ENCODE measurements at regions of chr19 and their contacts with region 1.

Region 1: DNA sequence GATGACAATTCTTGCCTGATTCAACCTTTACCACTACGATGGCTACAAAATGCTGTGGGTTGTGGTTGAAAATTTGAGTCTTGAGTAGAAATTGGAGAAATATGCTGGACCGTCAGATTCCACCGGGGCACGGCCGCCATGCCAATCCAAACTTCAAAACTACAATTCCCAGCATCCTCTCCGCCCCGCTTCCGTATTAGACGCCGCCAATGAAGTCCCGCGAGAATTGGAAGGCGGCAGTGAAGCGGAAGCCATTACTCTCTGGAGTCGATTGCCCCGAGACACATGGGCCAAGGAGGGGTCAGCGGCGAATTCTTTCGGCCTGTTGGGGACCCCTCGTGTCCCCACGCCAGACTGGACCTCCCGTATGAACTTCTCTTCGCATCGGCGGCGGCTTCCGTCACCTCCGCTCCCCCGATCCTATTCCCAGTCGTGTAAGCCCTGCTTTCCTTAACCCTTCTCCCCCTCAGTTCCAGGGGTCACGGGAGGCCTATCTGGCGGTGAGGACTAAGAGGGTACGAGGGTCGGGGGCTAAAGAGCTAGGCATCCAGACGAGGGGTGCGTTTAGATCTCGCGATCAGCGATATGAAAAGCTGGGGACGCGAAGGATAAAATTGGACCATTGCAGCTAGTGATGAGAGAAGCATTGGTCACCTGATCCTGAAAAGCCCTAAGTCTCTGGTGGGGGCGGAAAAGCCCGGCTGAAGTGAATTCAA is at the start of gene ZNF317:
- DNase-seq: peak; percentile 96
- H3K4me3 ChIP-seq: peak within 1 kb of the TSS; percentile 87
- H3K27ac ChIP-seq: peak within 1 kb of the TSS; percentile 37
- H3K4me1 ChIP-seq: peaks cover 11% of the 10 kb centered on the region
- CTCF ChIP-seq: no peak
- total RNA-seq, gene ZNF317: 19.9 and 26.5 TPM in 2 replicates

Region 2: GRCh38 chr19:9178901-9179300 is 38.6 kb after region 1 on chr19 and contains the start of gene OR7D2:
- CTCF ChIA-PET with region 1: no interaction called
- POLR2A ChIA-PET with region 1: no interaction called
- intact Hi-C with region 1: no loop called
- DNase-seq: no peak
- H3K4me3 ChIP-seq: no peak within 1 kb of the TSS
- H3K27ac ChIP-seq: no peak within 1 kb of the TSS
- H3K4me1 ChIP-seq: no peaks in the 10 kb centered on the region
- CTCF ChIP-seq: no peak
- total RNA-seq, gene OR7D2: not detected in 2 replicates

Region 3: DNA sequence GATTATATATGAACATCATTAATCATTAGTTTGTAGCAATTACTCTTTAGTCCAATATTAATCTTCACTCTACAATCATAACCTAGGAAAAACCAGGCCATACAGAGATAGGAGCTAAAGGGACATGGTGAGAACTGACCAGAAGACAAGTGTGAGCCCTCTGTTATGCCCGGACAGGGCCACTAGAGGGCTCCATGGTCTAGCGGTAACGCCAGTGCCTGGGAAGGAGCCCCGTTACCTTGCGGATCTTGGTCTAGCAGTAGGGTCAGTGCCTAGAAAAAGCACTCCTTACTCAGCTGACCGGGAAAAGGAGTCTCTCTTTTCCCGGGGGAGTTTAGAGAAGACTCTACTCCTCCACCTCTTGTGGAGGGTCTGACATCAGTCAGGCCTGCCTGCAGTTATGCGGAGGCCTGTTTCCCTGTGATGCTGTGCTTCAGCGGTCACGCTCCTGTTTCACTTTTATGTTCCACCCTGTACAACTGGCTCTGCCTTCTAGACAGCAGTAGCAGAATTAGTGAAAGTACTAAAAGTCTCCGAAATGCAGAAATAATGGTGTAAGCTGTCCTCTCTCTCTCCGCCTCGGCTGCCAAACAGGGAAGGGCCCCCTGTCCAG is 65.3 kb after region 1 on chr19:
- CTCF ChIA-PET with region 1: no interaction called
- POLR2A ChIA-PET with region 1: no interaction called
- intact Hi-C with region 1: loop called (anchors 2 kb)
- DNase-seq: peak; percentile 67
- H3K4me3 ChIP-seq: no peak overlapping the region
- H3K27ac ChIP-seq: no peak overlapping the region
- H3K4me1 ChIP-seq: no peaks in the 10 kb centered on the region
- CTCF ChIP-seq: peak; percentile 85

Region 4: DNA sequence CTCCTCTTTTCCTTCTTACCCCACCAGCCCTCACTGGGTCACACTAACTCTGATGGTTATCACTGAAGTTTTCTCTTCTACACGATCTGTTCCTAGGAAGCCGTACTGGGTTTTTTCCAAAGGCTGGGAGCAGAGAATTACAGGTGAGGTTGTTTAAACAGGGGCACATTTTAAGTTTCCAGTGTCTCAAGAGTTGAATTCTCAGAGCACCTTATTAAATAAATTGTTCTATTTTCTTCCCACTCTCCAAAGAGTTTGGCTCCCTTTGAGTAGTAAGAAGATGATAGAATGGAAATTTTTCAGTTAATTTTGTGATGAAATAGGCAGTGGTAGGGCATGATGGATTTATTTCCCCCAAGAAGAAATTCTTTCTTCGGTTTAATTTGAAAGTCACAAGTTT is 79.2 kb after region 1 on chr19 and contains the start of gene OR7D4:
- CTCF ChIA-PET with region 1: no interaction called
- POLR2A ChIA-PET with region 1: no interaction called
- intact Hi-C with region 1: no loop called
- DNase-seq: no peak
- H3K4me3 ChIP-seq: no peak within 1 kb of the TSS
- H3K27ac ChIP-seq: no peak within 1 kb of the TSS
- H3K4me1 ChIP-seq: no peaks in the 10 kb centered on the region
- CTCF ChIP-seq: no peak
- total RNA-seq, gene OR7D4: not detected in 2 replicates

Region 5: DNA sequence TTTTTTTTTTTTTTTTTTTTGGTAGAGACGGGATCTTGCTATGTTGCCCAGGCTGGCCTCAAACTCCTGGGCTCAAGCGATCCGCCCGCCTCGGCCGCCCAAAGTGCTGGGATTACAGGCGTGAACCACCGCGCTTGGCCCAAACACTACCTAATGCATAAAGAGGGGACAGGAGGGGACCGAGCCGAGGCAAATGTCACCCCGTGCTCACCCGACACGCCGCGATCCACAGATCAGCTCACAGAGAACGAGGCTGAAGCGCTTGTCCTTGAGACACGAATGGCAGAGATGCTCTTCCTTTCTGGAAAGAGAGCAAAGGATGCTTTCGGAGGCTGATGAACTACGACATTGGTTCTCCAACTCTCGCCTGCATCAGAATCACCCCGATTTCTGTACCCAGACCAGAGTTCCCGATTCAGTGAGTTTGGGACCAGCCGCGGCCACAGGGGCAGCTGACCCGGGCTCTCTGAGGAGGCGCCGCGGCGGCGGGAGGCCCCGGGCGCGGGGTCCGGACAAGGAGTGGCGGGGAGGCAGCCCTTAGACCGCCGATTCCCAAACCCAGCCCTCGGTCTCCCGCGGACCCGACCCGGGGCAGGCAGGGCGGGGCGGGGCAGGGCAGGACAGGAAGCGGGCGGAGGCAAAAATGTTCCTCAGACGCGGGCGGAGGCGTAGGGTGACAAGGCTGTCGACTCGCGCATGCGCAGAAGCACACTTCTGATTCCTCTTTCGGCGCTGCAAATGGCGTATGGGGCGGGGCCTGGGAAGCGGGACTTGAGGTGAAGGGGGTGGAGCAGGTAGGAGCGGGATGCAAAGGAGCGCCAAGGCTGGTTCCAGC is 169.0 kb after region 1 on chr19 and contains the start of gene ZNF699:
- CTCF ChIA-PET with region 1: no interaction called
- POLR2A ChIA-PET with region 1: no interaction called
- intact Hi-C with region 1: loop called (anchors 10 kb)
- DNase-seq: peak; percentile 99
- H3K4me3 ChIP-seq: peak within 1 kb of the TSS; percentile 80
- H3K27ac ChIP-seq: peak within 1 kb of the TSS; percentile 69
- H3K4me1 ChIP-seq: peaks cover 12% of the 10 kb centered on the region
- CTCF ChIP-seq: no peak
- total RNA-seq, gene ZNF699: 8.2 and 9.7 TPM in 2 replicates

Region 6: DNA sequence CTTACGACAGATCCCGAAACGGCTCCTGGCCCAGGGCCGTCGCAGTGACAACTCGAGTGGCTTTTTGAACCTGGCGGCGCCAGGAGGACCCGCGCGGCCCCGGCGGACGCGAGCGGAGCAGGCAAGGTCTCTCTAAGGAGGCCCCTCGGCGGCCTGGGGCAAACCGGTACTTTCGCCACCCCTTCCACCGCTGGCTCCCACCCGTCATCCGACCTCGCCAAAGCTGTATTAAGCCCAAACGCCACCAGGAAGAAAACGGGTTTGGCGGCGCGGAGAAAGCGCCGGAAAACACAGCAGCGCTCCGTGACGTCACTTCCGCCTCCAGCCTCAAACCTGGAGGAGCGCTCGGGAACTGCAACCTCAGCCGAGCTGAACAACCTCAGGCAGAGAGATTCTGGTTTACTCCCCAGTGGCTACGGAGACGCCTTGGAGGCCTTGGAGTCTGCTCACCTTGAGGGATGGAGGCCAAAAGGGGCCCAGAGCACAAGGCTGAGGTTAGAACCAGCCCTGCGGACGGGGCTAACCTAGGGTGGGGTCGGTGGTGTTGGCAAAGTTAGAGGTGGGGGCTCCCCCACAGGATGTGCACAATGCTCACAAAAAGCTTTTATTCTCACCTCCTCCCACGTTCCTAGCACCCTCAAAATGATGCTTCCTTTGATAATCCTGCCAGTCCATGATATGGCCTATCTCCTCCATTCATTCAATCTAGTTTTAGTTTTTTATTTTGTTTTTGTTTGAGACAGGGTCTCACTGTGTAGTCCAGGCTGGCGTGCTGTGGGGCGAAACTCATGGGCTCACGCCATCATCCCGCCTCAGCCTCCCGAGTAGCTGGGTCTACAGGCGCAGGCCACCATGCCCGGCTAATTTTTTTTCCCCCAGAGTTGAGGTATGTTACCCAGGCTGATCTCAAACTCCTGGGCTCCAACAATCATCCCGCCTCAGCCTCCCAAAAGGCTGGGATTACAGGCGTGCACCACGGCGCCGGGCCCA is 295.3 kb after region 1 on chr19 and contains the start of gene ZNF266:
- CTCF ChIA-PET with region 1: no interaction called
- POLR2A ChIA-PET with region 1: no interaction called
- intact Hi-C with region 1: loop called (anchors 10 kb)
- DNase-seq: peak; percentile 95
- H3K4me3 ChIP-seq: peak within 1 kb of the TSS; percentile 93
- H3K27ac ChIP-seq: peak within 1 kb of the TSS; percentile 63
- H3K4me1 ChIP-seq: peaks cover 24% of the 10 kb centered on the region
- CTCF ChIP-seq: peak; percentile 59
- total RNA-seq, gene ZNF266: 22.1 and 28.2 TPM in 2 replicates

Region 7: DNA sequence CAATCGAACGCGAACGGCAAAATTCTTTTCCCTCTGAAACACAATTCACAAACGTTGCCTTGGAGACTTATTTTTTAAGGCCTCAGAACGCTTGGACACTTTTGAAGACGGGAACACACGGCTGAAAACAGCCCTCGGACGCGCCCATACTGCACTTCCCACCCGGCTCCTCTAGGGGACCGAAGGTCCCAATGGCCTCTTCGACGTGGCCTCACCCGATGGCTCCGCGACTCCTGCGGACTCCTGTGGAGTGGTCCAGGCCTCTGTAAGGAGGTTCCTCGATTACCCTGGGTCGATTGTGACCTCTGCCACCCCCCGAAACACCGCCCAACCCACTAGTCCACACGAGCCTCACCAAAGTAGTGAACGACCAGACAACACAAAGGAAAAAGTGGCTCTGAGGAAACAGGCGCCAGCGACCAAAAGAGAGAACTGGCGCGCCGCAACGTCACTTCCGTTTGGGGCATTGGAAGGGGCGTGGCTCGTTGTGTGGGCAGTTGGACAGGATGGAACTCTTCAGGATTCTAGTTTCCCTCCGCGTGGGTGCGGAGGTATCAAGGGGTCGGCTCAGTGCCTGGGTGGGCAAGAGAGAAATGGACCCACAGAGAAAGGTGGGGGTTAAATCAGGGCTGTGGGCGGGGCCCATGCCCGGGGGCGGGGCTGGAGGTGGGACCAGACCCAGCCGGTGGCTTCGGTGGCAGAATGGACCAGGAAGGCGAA is 358.0 kb after region 1 on chr19 and contains the start of gene ZNF560:
- CTCF ChIA-PET with region 1: no interaction called
- POLR2A ChIA-PET with region 1: no interaction called
- intact Hi-C with region 1: no loop called
- DNase-seq: no peak
- H3K4me3 ChIP-seq: no peak within 1 kb of the TSS
- H3K27ac ChIP-seq: no peak within 1 kb of the TSS
- H3K4me1 ChIP-seq: no peaks in the 10 kb centered on the region
- CTCF ChIP-seq: no peak
- total RNA-seq, gene ZNF560: not detected in 2 replicates